ENCODE measurements at regions of chr17 and their contacts with region 1.

Region 1: DNA sequence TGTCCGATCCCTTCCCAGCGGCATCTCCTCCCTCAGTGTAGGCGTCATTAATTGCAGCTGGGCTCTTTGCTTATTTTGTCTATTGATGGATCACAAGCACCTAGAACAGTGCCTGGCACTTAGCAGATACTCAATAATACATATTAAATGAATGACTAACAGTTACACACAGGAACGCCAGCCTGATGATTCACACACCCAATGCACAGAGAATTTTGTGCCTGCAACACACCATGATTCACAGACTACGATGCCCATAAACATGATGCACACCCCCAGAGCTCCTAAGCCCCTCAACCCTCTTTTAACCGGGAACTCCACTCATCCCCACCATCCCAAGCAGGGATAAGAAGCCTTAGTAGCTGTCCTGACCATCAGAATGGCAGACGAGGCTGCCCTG is 66.6 kb upstream of the TMEM97 start:
- DNase-seq: no peak
- H3K4me3 ChIP-seq: no peak overlapping the region
- CTCF ChIP-seq: no peak

Region 2: GRCh38 chr17:27805520-27806146 is 446.8 kb before region 1 on chr17:
- CTCF ChIA-PET with region 1: interaction called, 42 read pairs
- POLR2A ChIA-PET with region 1: no interaction called
- DNase-seq: peak; percentile 14
- H3K4me3 ChIP-seq: peak overlapping the region; percentile 34
- CTCF ChIP-seq: peak; percentile 85

Region 3: DNA sequence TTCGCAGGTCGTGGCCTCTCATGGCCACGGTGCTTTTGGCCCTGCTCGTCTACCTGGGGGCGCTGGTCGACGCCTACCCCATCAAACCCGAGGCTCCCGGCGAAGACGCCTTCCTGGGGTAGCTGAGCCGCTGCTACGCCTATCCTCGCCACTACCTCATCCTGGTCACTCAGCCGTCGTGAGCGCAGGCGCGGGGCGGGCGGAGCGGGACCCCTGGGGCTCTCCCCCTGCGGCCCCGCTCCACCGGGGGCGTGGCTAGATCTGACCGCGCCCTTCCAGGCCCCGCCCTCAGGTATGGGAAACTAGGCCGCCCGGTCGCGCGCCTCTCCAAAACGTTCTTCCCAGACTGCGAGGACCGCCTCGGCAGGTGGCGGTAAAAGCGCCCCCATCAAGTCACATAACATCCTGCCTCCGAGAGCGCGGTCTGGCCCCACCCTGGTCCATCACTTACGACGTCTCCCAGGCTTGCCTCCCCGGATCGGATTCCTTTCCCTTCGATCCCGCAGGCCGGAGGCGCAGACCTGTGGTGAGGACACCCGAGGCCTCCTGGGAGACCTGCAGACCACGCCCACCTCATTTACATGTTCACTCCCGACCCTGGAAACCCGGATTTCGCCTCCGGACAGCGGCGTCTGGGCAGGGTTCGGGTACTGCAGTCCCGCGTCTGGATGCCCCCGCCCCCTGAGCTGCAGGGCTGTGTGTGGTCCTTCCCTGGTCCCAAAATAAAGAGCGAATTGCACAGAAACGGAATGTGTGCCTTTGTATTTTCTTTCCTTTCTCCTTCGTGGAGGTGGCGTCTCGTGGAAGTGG is 24.9 kb before region 1 on chr17:
- CTCF ChIA-PET with region 1: interaction called, 16 read pairs
- POLR2A ChIA-PET with region 1: no interaction called
- DNase-seq: no peak
- H3K4me3 ChIP-seq: peak overlapping the region; percentile 51
- CTCF ChIP-seq: no peak

Region 4: DNA sequence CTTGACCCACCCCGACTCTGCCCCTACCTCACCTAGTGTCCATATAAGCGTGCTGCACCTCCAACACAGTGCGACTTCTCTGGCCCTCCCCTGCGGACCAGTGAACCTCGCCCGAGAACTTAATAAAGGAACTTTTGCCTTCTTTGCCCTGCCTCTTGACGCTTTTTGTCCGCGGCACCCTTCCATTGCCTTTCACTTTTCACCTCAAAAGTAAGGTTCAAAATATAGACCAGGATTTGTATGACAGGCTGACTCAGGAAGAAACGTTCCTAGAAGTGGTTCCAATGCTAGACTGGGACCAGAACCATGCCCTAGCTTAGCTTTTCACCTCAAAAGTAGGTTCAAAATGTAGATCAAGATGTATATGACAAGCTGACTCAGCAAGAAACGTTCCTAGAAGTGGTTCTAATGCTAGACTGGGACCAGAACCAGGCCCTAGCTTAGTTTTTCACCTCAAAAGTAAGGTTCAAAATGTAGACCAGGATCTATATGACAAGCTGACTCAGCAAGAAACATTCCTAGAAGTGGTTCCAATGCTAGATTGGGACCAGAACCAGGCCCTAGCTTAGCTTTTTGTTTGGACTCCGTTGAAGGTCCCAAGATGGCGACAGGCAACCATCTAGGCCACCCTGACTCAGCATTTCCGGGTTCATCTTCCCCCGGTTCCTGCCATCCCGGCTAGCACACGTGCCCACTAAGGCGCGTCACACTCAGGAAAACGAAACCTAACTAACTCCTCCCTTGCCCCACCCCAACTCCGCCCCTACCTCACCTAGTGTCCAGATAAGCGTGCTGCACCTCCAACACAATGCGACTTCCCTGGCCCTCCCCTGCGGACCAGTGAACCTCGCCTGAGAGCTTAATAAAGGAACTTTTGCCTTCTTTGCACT is 15.5 kb after region 1 on chr17:
- CTCF ChIA-PET with region 1: interaction called, 25 read pairs
- POLR2A ChIA-PET with region 1: interaction called, 3 read pairs
- DNase-seq: no peak
- H3K4me3 ChIP-seq: no peak overlapping the region
- CTCF ChIP-seq: no peak

Region 5: DNA sequence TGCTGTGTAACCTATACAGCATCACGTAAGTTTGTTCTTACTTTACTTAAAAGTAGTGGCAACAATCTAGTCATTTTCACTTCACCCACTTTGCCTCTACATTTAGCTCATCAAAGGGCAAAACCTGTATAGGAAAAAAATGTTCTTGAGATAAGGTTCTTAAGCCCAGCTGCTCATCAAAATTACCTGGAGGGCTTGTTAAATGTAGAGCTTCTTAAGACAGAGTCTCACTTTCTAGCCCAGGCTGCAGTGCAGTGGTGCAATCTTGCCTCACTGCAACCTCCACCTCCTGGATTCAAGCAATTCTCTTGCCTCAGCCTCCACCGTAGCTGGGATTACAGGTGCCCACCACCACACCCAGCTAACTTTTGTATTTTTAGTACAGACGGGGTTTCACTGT is 28.4 kb after region 1 on chr17:
- CTCF ChIA-PET with region 1: interaction called, 10 read pairs
- POLR2A ChIA-PET with region 1: no interaction called
- DNase-seq: no peak
- H3K4me3 ChIP-seq: no peak overlapping the region
- CTCF ChIP-seq: no peak

Region 6: DNA sequence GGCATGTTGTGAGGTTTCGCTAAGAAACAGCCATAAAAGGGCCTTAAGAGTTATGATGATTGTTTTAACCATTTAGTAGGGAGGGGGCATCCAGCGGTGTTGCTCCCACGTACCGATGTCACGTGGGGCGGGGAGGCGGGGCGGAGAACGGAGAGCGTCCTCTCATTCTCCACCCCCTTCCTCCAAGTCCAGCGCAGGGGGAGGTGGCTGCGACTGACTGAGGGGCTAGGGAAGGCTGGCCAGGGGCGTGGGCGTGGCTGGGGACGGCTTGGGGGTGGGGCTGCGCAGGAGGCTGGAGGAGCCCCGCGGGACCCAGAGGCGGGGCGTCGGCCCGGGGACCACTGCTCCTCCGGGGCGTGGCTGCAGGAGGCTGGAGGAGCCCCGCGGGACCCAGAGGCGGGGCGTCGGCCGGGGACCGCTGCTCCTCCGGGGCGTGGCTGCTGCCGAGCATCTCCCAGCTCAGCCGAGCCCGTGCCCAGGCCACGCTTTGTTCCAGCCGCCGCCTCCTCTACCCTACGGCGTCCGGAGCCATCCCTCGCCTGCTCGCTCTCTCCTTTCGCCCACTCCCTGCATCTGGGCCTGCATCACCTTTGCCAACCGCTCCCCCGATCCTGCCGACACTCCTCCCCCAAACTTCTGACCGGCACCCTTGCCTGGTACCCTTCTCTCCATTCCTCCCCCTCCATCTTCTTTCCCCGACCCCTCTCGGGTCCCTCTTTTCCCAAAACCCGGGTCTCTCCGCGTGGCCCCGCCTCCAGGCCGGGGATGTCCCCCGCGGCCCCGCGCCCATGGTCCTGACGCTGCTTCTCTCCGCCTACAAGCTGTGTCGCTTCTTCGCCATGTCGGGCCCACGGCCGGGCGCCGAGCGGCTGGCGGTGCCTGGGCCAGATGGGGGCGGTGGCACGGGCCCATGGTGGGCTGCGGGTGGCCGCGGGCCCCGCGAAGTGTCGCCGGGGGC is 119.1 kb after region 1 on chr17 and contains the start of gene SARM1:
- CTCF ChIA-PET with region 1: no interaction called
- POLR2A ChIA-PET with region 1: no interaction called
- DNase-seq: no peak
- H3K4me3 ChIP-seq: peak within 1 kb of the TSS; percentile 65
- CTCF ChIP-seq: no peak